Caco-2 (cell line): ENCODE measurements at regions of chr16 and their contacts with region 1.

Region 1: DNA sequence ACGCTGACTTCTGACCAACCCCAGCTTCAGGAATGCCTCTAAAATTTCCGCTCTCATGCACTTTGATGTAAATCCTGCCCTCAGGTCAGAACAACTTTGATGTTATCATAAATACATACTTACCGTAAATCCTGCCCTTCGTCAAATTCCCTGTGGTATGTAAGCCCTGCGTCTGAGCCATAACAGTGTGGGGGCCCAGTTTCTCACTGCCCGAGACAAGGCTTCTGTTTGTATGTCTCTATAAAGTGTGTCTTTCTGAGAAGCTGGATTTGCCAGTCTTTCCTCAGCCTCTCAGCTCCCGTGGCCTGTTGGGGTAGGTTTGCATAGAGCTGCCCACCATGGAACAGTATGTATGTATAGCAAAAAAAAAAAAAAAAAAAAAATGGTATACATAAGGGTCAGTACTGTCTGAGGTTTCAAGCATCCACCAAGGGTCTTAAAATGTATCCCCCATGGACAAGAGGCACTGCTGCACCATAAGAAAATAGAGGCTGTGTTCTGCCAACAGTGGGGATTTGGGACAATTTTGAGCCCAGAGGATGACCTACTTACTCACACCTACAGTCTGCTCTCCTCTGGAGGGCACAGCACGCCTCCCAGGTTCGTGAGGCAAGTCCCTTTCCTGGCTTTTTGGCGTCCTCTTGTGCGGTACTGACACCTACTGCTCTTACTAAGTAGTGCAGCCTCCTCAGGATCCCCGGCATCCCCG is 17.5 kb downstream of the PRMT7 start:
- DNase-seq: peak; percentile 96
- H3K4me3 ChIP-seq: no peak overlapping the region
- H3K4me3 Mint-ChIP-seq: peak overlapping the region; percentile 65
- H3K27ac Mint-ChIP-seq: peak overlapping the region; percentile 96
- H3K4me1 ChIP-seq: peaks cover 78% of the 10 kb centered on the region
- H3K4me1 Mint-ChIP-seq: peaks cover 49% of the 10 kb centered on the region
- H3K27me3 ChIP-seq: no peaks in the 10 kb centered on the region
- H3K27me3 Mint-ChIP-seq: no peaks in the 10 kb centered on the region
- CTCF ChIP-seq: peak; percentile 96 to 98

Region 2: GRCh38 chr16:68064791-68065365 is 263.4 kb before region 1 on chr16:
- CTCF ChIA-PET with region 1: interaction called, 3 read pairs
- POLR2A ChIA-PET with region 1: interaction called, 3 read pairs
- intact Hi-C with region 1: loop called (anchors 5 kb)
- DNase-seq: peak; percentile 90 to 91
- H3K4me3 ChIP-seq: no peak overlapping the region
- H3K4me3 Mint-ChIP-seq: peak overlapping the region; percentile 21
- H3K27ac Mint-ChIP-seq: peak overlapping the region; percentile 49
- H3K4me1 ChIP-seq: peaks cover 22% of the 10 kb centered on the region
- H3K4me1 Mint-ChIP-seq: peaks cover 25% of the 10 kb centered on the region
- H3K27me3 ChIP-seq: no peaks in the 10 kb centered on the region
- H3K27me3 Mint-ChIP-seq: no peaks in the 10 kb centered on the region
- CTCF ChIP-seq: peak; percentile 91 to 96

Region 3: DNA sequence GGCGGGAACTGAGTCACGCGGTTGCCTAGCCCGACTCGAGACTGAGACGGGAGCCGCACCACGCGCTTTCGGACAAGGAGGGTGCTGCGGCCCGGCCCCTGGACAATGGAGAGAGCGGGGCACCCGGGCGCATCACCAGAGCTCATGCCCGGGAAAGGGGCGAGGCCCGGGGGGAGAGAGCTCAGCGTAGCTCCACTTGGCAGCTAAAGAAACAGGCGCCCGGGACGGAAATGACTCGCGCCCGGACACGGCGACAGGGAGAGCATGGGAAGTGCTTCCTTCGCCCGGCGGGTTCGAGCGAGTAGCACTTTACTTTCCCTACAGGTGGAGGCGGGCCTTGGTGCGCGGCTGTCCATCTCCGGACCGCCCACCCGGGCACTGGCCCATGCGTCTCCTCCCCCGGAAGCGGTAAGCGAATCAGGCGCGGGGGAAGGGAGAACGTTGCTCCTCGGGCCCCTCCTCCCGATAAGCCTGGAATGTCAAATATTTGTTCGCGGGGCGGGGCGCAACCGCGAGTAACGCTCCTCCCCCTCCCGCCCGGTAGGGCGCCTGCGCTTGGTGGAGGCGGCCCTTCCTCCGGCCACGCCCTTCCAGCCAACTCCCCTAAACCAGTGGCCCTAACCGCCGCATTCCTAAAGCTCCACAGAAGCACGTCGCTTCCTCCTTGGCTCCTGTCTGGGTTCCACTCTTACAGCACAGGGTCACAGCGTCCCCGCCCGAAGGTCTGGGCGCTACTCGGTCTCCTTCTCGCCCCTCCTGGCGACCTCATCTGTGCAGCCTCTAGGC is 90.9 kb before region 1 on chr16:
- CTCF ChIA-PET with region 1: interaction called, 13 read pairs
- POLR2A ChIA-PET with region 1: interaction called, 32 read pairs
- intact Hi-C with region 1: loop called (anchors 1 kb)
- DNase-seq: peak; percentile 100
- H3K4me3 ChIP-seq: peak overlapping the region; percentile 79
- H3K4me3 Mint-ChIP-seq: peak overlapping the region; percentile 81
- H3K27ac Mint-ChIP-seq: peak overlapping the region; percentile 98
- H3K4me1 ChIP-seq: peaks cover 18% of the 10 kb centered on the region
- H3K4me1 Mint-ChIP-seq: peaks cover 19% of the 10 kb centered on the region
- H3K27me3 ChIP-seq: no peaks in the 10 kb centered on the region
- H3K27me3 Mint-ChIP-seq: no peaks in the 10 kb centered on the region
- CTCF ChIP-seq: no peak

Region 4: GRCh38 chr16:68264128-68265077 is 63.9 kb before region 1 on chr16 and contains the start of gene SLC7A6:
- CTCF ChIA-PET with region 1: interaction called, 98 read pairs
- POLR2A ChIA-PET with region 1: interaction called, 37 read pairs
- intact Hi-C with region 1: loop called (anchors 1 kb)
- DNase-seq: peak; percentile 85 to 90
- H3K4me3 ChIP-seq: peak within 1 kb of the TSS; percentile 94
- H3K4me3 Mint-ChIP-seq: peak within 1 kb of the TSS; percentile 91
- H3K27ac Mint-ChIP-seq: peak within 1 kb of the TSS; percentile 98
- H3K4me1 ChIP-seq: peaks cover 44% of the 10 kb centered on the region
- H3K4me1 Mint-ChIP-seq: peaks cover 31% of the 10 kb centered on the region
- H3K27me3 ChIP-seq: no peaks in the 10 kb centered on the region
- H3K27me3 Mint-ChIP-seq: no peaks in the 10 kb centered on the region
- CTCF ChIP-seq: peak; percentile 77 to 79
- total RNA-seq, gene SLC7A6: 236 and 267 TPM in 2 replicates

Region 5: GRCh38 chr16:68298907-68299561 is 29.3 kb before region 1 on chr16:
- CTCF ChIA-PET with region 1: interaction called, 5 read pairs
- POLR2A ChIA-PET with region 1: interaction called, 7 read pairs
- intact Hi-C with region 1: loop called (anchors 1 kb)
- DNase-seq: peak in 1 of 2 experiments; percentile 42
- H3K4me3 ChIP-seq: no peak overlapping the region
- H3K4me3 Mint-ChIP-seq: peak overlapping the region; percentile 46
- H3K27ac Mint-ChIP-seq: peak overlapping the region; percentile 89
- H3K4me1 ChIP-seq: peaks cover 29% of the 10 kb centered on the region
- H3K4me1 Mint-ChIP-seq: peaks cover 55% of the 10 kb centered on the region
- H3K27me3 ChIP-seq: no peaks in the 10 kb centered on the region
- H3K27me3 Mint-ChIP-seq: no peaks in the 10 kb centered on the region
- CTCF ChIP-seq: no peak

Region 6: GRCh38 chr16:69253870-69254341 is 925.6 kb after region 1 on chr16:
- CTCF ChIA-PET with region 1: interaction called, 10 read pairs
- POLR2A ChIA-PET with region 1: no interaction called
- intact Hi-C with region 1: no loop called
- DNase-seq: no peak
- H3K4me3 ChIP-seq: no peak overlapping the region
- H3K4me3 Mint-ChIP-seq: no peak overlapping the region
- H3K27ac Mint-ChIP-seq: peak overlapping the region; percentile 35
- H3K4me1 ChIP-seq: no peaks in the 10 kb centered on the region
- H3K4me1 Mint-ChIP-seq: peaks cover 10% of the 10 kb centered on the region
- H3K27me3 ChIP-seq: no peaks in the 10 kb centered on the region
- H3K27me3 Mint-ChIP-seq: no peaks in the 10 kb centered on the region
- CTCF ChIP-seq: no peak